ENCODE measurements at regions of chr11 and their contacts with region 1.

Region 1: GRCh38 chr11:35485656-35486322 is 39.6 kb downstream of the PAMR1 start:
- DNase-seq: peak; percentile 92
- ATAC-seq: peak; percentile 80
- H3K4me3 ChIP-seq: no peak overlapping the region
- H3K27ac ChIP-seq: no peak overlapping the region
- H3K4me1 ChIP-seq: peaks cover 26% of the 10 kb centered on the region
- H3K27me3 ChIP-seq: no peaks in the 10 kb centered on the region
- CTCF ChIP-seq: peak; percentile 87

Region 2: DNA sequence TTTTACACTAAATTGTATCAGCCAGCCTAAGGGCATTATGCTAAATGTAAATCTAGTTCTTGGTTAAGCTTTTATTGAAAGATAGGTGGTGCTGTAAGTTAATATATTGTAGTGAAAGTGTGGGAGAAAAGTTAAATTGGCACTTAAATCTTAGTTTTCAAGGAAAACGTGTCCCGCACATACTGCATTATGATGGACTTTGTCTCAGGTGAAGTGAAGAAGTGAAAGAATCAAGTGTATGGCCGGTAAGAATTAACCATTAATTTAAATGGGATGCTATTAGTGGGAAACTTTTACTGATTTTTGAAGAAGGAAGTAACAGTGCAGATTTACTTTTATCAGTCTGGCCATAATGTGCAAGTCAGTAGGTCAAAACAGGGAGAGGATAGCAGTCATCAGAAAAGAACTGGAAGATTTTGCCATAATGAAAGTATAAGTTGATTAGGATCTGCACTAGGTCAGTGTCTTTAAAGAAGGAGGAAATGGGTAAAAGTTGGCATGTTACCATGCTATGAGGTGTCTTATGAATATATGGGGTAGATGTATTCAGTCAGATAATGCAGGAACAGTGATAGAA is 487.7 kb before region 1 on chr11:
- CTCF ChIA-PET with region 1: no interaction called
- POLR2A ChIA-PET with region 1: no interaction called
- intact Hi-C with region 1: loop called (anchors 5 kb)
- DNase-seq: peak; percentile 71
- ATAC-seq: peak; percentile 74
- H3K4me3 ChIP-seq: peak overlapping the region; percentile 5; the same call in 1 of the 2 replicates
- H3K27ac ChIP-seq: peak overlapping the region; percentile 79
- H3K4me1 ChIP-seq: peaks cover 20% of the 10 kb centered on the region
- H3K27me3 ChIP-seq: no peaks in the 10 kb centered on the region
- CTCF ChIP-seq: peak; percentile 85

Region 3: GRCh38 chr11:35464308-35464707 is 21.5 kb before region 1 on chr11:
- CTCF ChIA-PET with region 1: no interaction called
- POLR2A ChIA-PET with region 1: no interaction called
- intact Hi-C with region 1: loop called (anchors 1 kb)
- DNase-seq: peak; percentile 54
- ATAC-seq: peak; percentile 95
- H3K4me3 ChIP-seq: no peak overlapping the region
- H3K27ac ChIP-seq: no peak overlapping the region
- H3K4me1 ChIP-seq: peaks cover 12% of the 10 kb centered on the region; the same call in 1 of the 2 replicates
- H3K27me3 ChIP-seq: no peaks in the 10 kb centered on the region
- CTCF ChIP-seq: peak; percentile 60

Region 4: GRCh38 chr11:35579557-35580396 is 94.0 kb after region 1 on chr11:
- CTCF ChIA-PET with region 1: no interaction called
- POLR2A ChIA-PET with region 1: no interaction called
- intact Hi-C with region 1: loop called (anchors 1 kb)
- DNase-seq: peak; percentile 86
- ATAC-seq: peak; percentile 82
- H3K4me3 ChIP-seq: peak overlapping the region; percentile 54; the same call in 1 of the 2 replicates
- H3K27ac ChIP-seq: peak overlapping the region; percentile 84
- H3K4me1 ChIP-seq: peaks cover 33% of the 10 kb centered on the region
- H3K27me3 ChIP-seq: no peaks in the 10 kb centered on the region
- CTCF ChIP-seq: no peak

Region 5: GRCh38 chr11:35794850-35795249 is 309.1 kb after region 1 on chr11:
- CTCF ChIA-PET with region 1: no interaction called
- POLR2A ChIA-PET with region 1: no interaction called
- intact Hi-C with region 1: loop called (anchors 10 kb)
- DNase-seq: peak; percentile 77
- ATAC-seq: peak; percentile 33
- H3K4me3 ChIP-seq: no peak overlapping the region
- H3K27ac ChIP-seq: peak overlapping the region; percentile 16
- H3K4me1 ChIP-seq: peaks cover 56% of the 10 kb centered on the region
- H3K27me3 ChIP-seq: no peaks in the 10 kb centered on the region
- CTCF ChIP-seq: no peak

Region 6: GRCh38 chr11:36149538-36150242 is 663.9 kb after region 1 on chr11:
- CTCF ChIA-PET with region 1: interaction called, 3 read pairs
- POLR2A ChIA-PET with region 1: no interaction called
- intact Hi-C with region 1: loop called (anchors 5 kb)
- DNase-seq: peak; percentile 99
- ATAC-seq: peak; percentile 96
- H3K4me3 ChIP-seq: peak overlapping the region; percentile 10; the same call in 1 of the 2 replicates
- H3K27ac ChIP-seq: peak overlapping the region; percentile 70
- H3K4me1 ChIP-seq: peaks cover 29% of the 10 kb centered on the region
- H3K27me3 ChIP-seq: no peaks in the 10 kb centered on the region
- CTCF ChIP-seq: peak; percentile 79

Region 7: DNA sequence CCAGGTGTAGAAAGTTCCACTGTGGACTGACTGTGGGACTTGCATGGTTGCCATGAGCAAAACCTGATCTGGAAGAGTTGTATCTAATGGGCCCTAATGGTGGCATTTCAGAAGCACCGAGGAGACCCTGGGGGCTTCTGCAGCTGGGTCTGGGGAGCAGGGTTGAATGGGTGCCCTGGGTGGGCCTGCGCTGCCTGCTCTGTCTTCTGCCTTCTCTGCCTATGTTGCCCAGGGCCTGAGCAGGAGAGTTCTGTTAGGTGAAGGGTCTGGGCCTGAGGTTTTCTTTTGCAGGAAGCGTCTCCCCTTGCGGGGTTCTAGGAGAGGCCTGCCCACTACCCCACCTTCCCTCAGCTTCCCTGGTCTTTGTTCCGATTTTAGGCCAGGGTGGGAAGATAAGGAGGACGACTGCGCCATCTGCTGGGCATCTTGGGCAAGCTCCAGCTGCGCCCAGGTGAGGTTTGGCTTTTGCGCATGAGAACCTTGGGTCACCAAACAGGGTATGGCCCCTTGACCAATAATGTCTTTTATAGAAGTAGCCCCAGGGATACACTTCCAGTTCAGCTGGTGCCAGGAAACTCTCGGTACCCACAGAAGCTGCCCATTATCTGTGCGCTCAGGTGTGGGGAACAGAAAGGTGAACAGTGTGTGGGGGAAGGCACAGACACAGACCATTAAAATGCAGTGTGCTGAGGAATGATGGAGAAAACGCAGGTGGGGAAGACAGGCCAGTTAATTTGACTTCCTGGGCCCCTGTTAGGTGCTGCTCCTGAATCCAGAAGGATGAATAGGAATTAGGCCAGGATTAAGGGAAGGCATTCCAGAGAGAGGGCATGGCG is 780.2 kb after region 1 on chr11:
- CTCF ChIA-PET with region 1: no interaction called
- POLR2A ChIA-PET with region 1: no interaction called
- intact Hi-C with region 1: loop called (anchors 5 kb)
- DNase-seq: peak; percentile 70
- ATAC-seq: peak; percentile 86
- H3K4me3 ChIP-seq: no peak overlapping the region
- H3K27ac ChIP-seq: no peak overlapping the region
- H3K4me1 ChIP-seq: no peaks in the 10 kb centered on the region
- H3K27me3 ChIP-seq: no peaks in the 10 kb centered on the region
- CTCF ChIP-seq: peak; percentile 90

Measured in PC-3 (cell line).